H1 (cell line): ENCODE measurements at regions of chr5 and their contacts with region 1.

Region 1: GRCh38 chr5:114449860-114450421 is 88.1 kb downstream of the KCNN2 start:
- DNase-seq: peak; percentile 43 to 78
- H3K4me3 ChIP-seq: peak overlapping the region in 1 of 4 experiments; percentile 11; a peak in 1 of 8 replicates
- H3K27ac ChIP-seq: no peak overlapping the region
- H3K4me1 ChIP-seq: peaks cover 4 to 18% (median 15%) of the 10 kb centered on the region in 4 experiments; a peak in 6 of 7 replicates
- H3K27me3 ChIP-seq: no peaks in the 10 kb centered on the region
- CTCF ChIP-seq: peak; percentile 86 to 98 (median 93)
- EP300 ChIP-seq: no peak
- POLR2A ChIP-seq: no peak
- RAD21 ChIP-seq: peak; percentile 92 to 93

Region 2: GRCh38 chr5:114305402-114306211 is 144.3 kb before region 1 on chr5:
- CTCF ChIA-PET with region 1: interaction called, 42 read pairs
- POLR2A ChIA-PET with region 1: interaction called, 3 read pairs
- DNase-seq: peak in 1 of 2 experiments; percentile 50
- H3K4me3 ChIP-seq: no peak overlapping the region
- H3K27ac ChIP-seq: no peak overlapping the region
- H3K4me1 ChIP-seq: peaks cover 0 to 12% (median 9%) of the 10 kb centered on the region in 4 experiments; a peak in 5 of 7 replicates
- H3K27me3 ChIP-seq: no peaks in the 10 kb centered on the region
- CTCF ChIP-seq: peak in 2 of 3 experiments; percentile 39 to 61; a peak in 2 of 4 replicates
- EP300 ChIP-seq: no peak
- POLR2A ChIP-seq: no peak
- RAD21 ChIP-seq: peak; percentile 74 to 75

Region 3: DNA sequence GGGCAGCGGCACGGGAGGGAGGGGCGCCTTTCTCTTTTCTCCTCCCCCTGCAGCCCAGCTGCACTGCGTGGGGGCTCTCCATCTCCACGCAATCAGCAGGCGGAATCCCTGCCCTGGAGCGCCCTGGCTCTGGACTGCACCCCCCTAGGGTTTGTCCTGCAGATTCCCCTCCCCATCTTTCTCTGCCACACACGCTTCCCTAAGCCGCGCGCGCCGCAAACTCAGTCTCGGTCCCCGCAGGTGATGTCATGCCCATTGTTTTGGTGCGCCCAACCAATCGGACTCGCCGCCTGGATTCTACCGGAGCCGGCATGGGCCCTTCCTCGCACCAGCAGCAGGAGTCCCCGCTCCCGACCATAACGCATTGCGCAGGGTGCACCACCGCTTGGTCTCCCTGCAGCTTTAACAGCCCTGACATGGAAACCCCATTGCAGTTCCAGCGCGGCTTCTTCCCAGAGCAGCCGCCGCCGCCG is 88.2 kb before region 1 on chr5 and contains the start of gene KCNN2:
- CTCF ChIA-PET with region 1: interaction called, 176 read pairs
- POLR2A ChIA-PET with region 1: interaction called, 18 read pairs
- DNase-seq: peak in 1 of 2 experiments; percentile 87
- H3K4me3 ChIP-seq: peak within 1 kb of the TSS; percentile 83 to 90 (median 88)
- H3K27ac ChIP-seq: peak within 1 kb of the TSS; percentile 92
- H3K4me1 ChIP-seq: peaks cover 0 to 9% (median under 1%) of the 10 kb centered on the region in 4 experiments; a peak in 3 of 7 replicates
- H3K27me3 ChIP-seq: peaks cover 0 to 4% (median 0%) of the 10 kb centered on the region in 4 experiments; a peak in 1 of 7 replicates
- CTCF ChIP-seq: no peak
- EP300 ChIP-seq: no peak; a peak in 1 of 3 replicates
- POLR2A ChIP-seq: peak; percentile 48 to 60; a peak in 2 of 3 replicates
- RAD21 ChIP-seq: no peak
- total RNA-seq, gene KCNN2: 18.6 and 19.4 TPM in 2 replicates

Region 4: DNA sequence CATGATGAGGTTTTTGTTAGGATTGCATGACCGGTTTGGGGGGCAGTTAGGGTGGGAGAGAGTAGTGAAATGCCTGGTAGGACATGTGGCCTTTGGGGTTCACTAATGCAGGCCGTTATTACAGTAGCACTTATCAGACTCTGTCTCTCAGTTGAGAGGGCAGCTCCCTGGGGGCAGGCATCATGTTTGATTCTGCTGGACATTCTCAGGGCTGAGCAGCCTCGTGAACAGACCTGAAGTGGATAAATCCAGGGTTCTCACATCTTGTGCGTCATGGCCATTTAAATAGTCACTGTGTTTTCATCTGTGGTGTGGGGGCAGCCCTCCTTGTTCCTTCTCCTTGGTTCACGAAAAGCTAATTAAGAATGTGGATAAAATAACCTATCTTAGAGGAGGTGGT is 69.2 kb before region 1 on chr5:
- CTCF ChIA-PET with region 1: interaction called, 16 read pairs
- POLR2A ChIA-PET with region 1: no interaction called
- DNase-seq: no peak
- H3K4me3 ChIP-seq: no peak overlapping the region
- H3K27ac ChIP-seq: no peak overlapping the region
- H3K4me1 ChIP-seq: peaks cover 0 to 6% (median 2%) of the 10 kb centered on the region in 4 experiments; a peak in 3 of 7 replicates
- H3K27me3 ChIP-seq: no peaks in the 10 kb centered on the region
- CTCF ChIP-seq: no peak
- EP300 ChIP-seq: no peak
- POLR2A ChIP-seq: no peak
- RAD21 ChIP-seq: no peak

Region 5: GRCh38 chr5:114435885-114436299 is 14.0 kb before region 1 on chr5:
- CTCF ChIA-PET with region 1: interaction called, 118 read pairs
- POLR2A ChIA-PET with region 1: interaction called, 5 read pairs
- DNase-seq: no peak
- H3K4me3 ChIP-seq: no peak overlapping the region
- H3K27ac ChIP-seq: no peak overlapping the region
- H3K4me1 ChIP-seq: peaks cover 0 to 7% (median 0%) of the 10 kb centered on the region in 4 experiments; a peak in 1 of 7 replicates
- H3K27me3 ChIP-seq: no peaks in the 10 kb centered on the region
- CTCF ChIP-seq: no peak
- EP300 ChIP-seq: no peak
- POLR2A ChIP-seq: no peak
- RAD21 ChIP-seq: no peak